Cardiac septum (tissue), 1 donor: ENCODE measurements at regions of chr9 and their contacts with region 1.

Region 1: DNA sequence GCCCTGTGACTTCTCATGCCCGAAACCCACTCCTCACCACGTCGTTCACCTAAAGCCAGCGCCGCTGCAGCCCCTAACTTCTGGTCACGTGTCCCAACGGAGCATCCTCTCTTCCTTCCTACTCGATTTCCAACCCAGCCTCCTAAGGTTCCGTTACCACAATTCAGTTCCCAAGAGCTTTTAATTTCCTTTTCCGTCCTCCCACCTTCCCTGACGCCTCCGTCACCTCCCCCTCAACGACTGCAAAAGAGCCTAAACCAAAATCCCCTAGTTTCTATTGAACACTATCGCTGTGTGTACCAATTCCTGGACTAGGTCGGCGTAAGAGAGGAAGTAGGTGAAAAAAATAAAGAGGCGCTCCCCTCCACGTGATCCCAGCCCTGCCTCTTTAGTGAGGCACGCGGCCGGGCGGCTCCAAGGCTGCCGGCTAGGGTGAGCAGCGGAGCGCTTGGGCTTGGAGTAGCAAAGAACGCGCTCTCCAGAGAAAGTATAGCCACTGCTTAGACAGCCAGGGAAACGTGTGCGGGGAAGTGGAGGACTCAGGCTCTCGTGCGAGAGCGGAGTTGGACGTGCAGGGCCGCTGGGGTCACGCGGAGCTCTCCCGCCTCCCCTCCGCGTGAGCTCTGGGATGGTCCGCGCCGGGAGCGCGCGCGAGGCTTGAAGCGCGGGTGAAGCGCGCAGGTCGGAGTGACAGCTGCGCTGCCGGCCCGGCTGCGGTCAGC is at the starts of genes CENPP and NOL8:
- DNase-seq: peak; percentile 92
- total RNA-seq, gene CENPP: 3.5 TPM
- total RNA-seq, gene NOL8: 15.6 TPM

Region 2: DNA sequence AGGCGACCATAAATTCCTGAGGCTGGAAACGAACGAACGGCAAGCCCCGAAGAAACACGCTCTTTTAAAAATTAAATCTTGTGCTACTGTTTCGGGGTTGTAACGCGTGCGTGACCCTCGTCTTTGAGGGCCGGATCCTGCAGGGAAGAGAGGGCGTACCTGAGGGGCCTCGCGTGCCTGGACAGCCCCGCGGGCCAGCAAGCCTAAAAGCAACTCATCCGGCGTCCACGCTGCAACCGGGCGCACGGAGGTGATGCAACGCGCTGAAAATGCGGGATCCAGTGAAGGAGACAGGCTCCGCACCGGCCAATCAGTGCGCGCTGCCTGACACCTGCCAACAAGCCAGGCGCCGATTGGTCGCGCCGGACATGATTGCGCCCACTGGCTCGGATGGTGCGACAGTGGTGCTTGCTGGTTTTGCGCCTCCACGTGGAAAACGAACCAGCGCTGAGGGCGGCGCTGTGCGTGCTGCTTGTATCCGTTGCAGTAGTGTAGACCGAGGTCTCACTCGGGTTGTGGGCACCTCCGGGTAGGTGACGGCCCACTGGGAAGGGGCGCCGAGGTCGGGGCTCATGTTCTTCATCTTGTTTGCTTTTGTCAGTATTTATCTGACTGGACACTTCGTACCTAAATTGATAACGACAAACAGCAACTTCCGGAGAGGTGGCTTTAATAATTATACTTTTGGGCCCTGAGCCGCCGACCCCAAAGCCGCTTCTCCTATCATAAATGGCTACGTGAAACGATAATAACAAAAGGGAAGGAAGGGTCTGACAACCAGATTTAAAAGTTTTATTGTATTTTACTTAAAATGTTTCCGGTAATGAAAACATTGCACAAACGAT is 31.8 kb before region 1 on chr9 and contains the start of gene IARS1:
- intact Hi-C with region 1: loop called (anchors 5 kb)
- DNase-seq: peak; percentile 99
- total RNA-seq, gene IARS1: 69.5 TPM

Region 3: GRCh38 chr9:92308893-92309292 is 16.5 kb before region 1 on chr9:
- intact Hi-C with region 1: no loop called
- DNase-seq: no peak

Region 4: GRCh38 chr9:92463984-92464383 is 138.6 kb after region 1 on chr9:
- intact Hi-C with region 1: no loop called
- DNase-seq: no peak

Region 5: GRCh38 chr9:92696619-92697018 is 371.2 kb after region 1 on chr9:
- intact Hi-C with region 1: no loop called
- DNase-seq: no peak